Caco-2 (cell line): ENCODE measurements at regions of chr1 and their contacts with region 1.

Region 1: DNA sequence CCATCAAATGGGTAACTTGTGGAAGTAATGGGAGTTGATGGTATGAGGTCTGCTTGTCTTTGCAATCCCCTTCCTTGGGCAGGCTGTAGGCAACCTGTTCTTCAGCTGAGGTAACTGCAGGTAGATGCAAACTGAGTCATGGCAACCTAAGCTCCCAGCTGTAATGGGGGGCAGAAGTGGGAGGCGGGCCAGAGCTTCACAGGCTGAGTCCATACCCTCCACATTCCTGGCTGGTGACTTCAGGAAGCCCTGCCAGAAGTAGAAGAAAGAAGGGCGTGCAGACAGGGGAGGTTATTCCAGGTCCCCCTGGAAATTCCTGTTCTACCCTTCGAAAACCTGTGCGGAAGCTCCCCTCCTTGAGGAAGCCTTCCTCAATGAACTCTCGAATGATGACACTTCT is 44.9 kb downstream of the ARHGEF11 start:
- DNase-seq: no peak
- H3K4me3 ChIP-seq: no peak overlapping the region
- H3K4me3 Mint-ChIP-seq: no peak overlapping the region
- H3K27ac Mint-ChIP-seq: no peak overlapping the region
- H3K4me1 ChIP-seq: peaks cover 16% of the 10 kb centered on the region
- H3K4me1 Mint-ChIP-seq: peaks cover 25% of the 10 kb centered on the region
- H3K27me3 ChIP-seq: no peaks in the 10 kb centered on the region
- H3K27me3 Mint-ChIP-seq: no peaks in the 10 kb centered on the region
- CTCF ChIP-seq: no peak

Region 2: DNA sequence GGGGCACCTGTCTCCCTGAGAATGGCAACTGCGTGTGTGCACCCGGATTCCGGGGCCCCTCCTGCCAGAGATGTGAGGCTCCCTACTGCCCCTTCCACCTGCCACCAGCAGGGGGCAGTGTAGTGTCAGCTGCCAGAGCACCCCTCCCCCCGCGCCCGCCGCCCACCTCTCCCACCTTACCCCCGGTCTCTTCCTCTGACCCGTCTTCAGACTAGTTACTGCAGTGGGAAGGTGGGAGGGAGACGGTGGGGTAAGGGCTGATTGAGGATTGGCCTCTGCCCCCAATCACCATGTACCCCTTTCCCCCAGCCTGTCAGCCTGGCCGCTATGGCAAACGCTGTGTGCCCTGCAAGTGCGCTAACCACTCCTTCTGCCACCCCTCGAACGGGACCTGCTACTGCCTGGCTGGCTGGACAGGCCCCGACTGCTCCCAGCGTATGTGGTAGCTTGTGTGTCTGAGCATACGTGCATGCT is 90.3 kb before region 1 on chr1:
- CTCF ChIA-PET with region 1: no interaction called
- POLR2A ChIA-PET with region 1: no interaction called
- intact Hi-C with region 1: no loop called
- DNase-seq: peak in 1 of 2 experiments; percentile 67
- H3K4me3 ChIP-seq: no peak overlapping the region
- H3K4me3 Mint-ChIP-seq: no peak overlapping the region
- H3K27ac Mint-ChIP-seq: no peak overlapping the region
- H3K4me1 ChIP-seq: 0 out of 2 replicates have a peak, but pooled peaks cover 9% of the 10 kb centered on the region
- H3K4me1 Mint-ChIP-seq: no peaks in the 10 kb centered on the region
- H3K27me3 ChIP-seq: no peaks in the 10 kb centered on the region
- H3K27me3 Mint-ChIP-seq: no peaks in the 10 kb centered on the region
- CTCF ChIP-seq: peak; percentile 70 to 91

Region 3: DNA sequence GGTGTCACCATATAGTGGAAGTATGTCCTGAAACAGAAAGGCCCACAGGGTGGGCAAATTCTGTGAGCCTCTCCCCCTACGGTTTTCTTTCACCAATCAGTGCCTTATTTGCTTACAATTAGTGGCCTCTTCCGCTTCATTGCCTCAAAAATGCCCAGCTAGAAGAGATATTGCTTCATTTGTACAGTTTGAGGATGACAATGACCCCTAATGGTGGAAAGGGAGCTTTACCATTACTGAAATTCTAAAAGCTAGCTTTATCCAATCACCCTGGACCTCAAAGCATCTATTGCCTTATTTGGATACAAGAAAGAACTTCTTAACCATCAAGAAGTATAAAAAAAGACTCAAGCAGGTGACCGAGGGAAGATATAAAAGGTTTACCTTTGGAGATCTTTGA is 30.7 kb before region 1 on chr1:
- CTCF ChIA-PET with region 1: interaction called, 11 read pairs
- POLR2A ChIA-PET with region 1: no interaction called
- intact Hi-C with region 1: loop called (anchors 2 kb)
- DNase-seq: no peak
- H3K4me3 ChIP-seq: no peak overlapping the region
- H3K4me3 Mint-ChIP-seq: no peak overlapping the region
- H3K27ac Mint-ChIP-seq: no peak overlapping the region
- H3K4me1 ChIP-seq: peaks cover 35% of the 10 kb centered on the region
- H3K4me1 Mint-ChIP-seq: peaks cover 19% of the 10 kb centered on the region
- H3K27me3 ChIP-seq: no peaks in the 10 kb centered on the region
- H3K27me3 Mint-ChIP-seq: no peaks in the 10 kb centered on the region
- CTCF ChIP-seq: peak; percentile 12 to 22